ENCODE measurements at regions of chr14 and their contacts with region 1.

Region 1: DNA sequence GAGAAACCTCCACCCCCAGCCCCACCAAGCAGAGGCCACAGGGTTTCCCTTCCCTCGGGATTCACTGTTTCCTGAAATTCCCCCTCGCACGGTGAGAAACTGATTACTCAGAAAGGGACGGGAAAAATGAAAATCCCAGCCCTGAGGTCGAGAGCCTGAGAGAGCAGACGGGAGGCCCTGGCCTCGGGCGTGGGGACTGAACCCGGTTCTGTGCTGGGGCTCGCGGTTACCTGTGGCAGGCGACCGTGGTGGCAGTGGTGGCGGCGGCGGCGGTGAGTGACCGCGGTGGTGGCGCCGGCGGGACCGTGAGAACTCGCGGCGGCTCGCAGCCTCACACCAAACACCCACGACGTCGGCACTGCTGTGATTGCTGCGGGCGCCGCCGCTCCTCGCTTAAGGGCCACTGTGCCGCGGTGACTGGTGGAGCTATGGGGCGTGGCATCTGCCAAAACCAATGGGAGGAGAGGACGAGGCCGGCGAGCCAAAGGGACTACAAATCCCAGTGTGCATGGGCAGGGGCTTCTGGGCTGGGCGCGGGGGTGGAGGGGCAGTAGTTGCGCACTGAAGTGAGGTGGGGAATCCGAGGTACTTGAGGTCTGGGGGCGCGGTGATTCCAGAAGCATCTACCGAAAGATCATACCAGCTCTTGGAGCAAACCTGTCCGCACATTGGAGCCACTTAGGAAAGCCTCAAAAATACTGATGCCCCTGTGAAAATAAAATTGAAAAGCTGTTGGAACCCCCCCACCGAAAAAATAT is at the start of gene LGMN:
- DNase-seq: peak; percentile 68
- H3K4me3 Mint-ChIP-seq: peak within 1 kb of the TSS; percentile 64
- H3K27ac Mint-ChIP-seq: peak within 1 kb of the TSS; percentile 18
- H3K4me1 Mint-ChIP-seq: peaks cover 31% of the 10 kb centered on the region
- H3K27me3 Mint-ChIP-seq: peaks cover 68% of the 10 kb centered on the region
- total RNA-seq, gene LGMN: 1.3 and 2.2 TPM in 2 replicates

Region 2: GRCh38 chr14:92729626-92730358 is 18.6 kb before region 1 on chr14:
- intact Hi-C with region 1: loop called (anchors 1 kb)
- DNase-seq: no peak
- H3K4me3 Mint-ChIP-seq: no peak overlapping the region
- H3K27ac Mint-ChIP-seq: peak overlapping the region; percentile 90
- H3K4me1 Mint-ChIP-seq: peaks cover 18% of the 10 kb centered on the region
- H3K27me3 Mint-ChIP-seq: peaks cover 40% of the 10 kb centered on the region

Region 3: DNA sequence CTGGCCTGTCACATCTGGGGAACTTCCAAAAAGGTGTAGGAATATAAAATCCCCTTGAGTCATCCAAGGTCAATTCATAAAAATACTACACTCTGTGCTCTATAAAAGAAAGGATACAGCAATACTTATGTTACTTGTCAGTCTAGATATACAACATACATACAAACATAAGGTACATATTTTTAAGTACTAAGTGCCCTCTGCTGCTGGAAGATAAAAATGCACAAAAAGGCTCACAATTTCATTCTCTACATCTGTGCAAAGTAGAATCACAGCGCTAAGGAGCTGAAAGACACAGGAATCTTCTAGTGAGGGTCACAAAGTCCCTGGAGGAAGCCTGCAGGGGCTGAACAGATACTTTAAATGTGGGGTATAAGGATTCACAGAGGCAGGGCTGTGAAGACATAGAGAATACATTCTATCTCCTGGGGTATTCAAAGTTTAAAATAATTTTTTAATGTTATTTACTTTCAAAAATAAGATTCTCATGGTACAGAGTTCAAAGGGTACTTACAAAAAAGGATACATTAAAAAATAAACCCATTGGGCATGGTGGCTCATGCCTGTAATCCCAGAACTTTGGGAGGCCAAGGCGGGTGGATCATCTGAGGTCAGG is 35.5 kb after region 1 on chr14:
- intact Hi-C with region 1: loop called (anchors 5 kb)
- DNase-seq: peak; percentile 20
- H3K4me3 Mint-ChIP-seq: no peak overlapping the region
- H3K27ac Mint-ChIP-seq: no peak overlapping the region
- H3K4me1 Mint-ChIP-seq: peaks cover 26% of the 10 kb centered on the region
- H3K27me3 Mint-ChIP-seq: peaks cover 8% of the 10 kb centered on the region

Region 4: GRCh38 chr14:93103392-93104080 is 355.1 kb after region 1 on chr14:
- intact Hi-C with region 1: no loop called
- DNase-seq: peak; percentile 77
- H3K4me3 Mint-ChIP-seq: peak overlapping the region; percentile 77
- H3K27ac Mint-ChIP-seq: peak overlapping the region; percentile 93
- H3K4me1 Mint-ChIP-seq: peaks cover 51% of the 10 kb centered on the region
- H3K27me3 Mint-ChIP-seq: no peaks in the 10 kb centered on the region